ENCODE measurements at regions of chr1 and their contacts with region 1.

Region 1: GRCh38 chr1:156525071-156525501 is 24.5 kb upstream of the MEF2D start:
- DNase-seq: no peak
- ATAC-seq: peak in 3 of 8 donors; percentile 15 to 43 (median 27)
- H3K4me3 ChIP-seq: no peak overlapping the region
- H3K27ac ChIP-seq: peak overlapping the region in 2 of 10 donors; percentile 15 to 69
- H3K4me1 ChIP-seq: peaks cover 0 to 22% (median 8%) of the 10 kb centered on the region in 9 donors
- H3K27me3 ChIP-seq: no peaks in the 10 kb centered on the region
- CTCF ChIP-seq: no peak

Region 2: GRCh38 chr1:156291226-156292061 is 233.6 kb before region 1 on chr1:
- intact Hi-C with region 1: no loop called
- DNase-seq: peak; percentile 87 to 90
- ATAC-seq: peak; percentile 93 to 97 (median 94)
- H3K4me3 ChIP-seq: peak overlapping the region in 9 of 10 donors; percentile 29 to 59 (median 56)
- H3K27ac ChIP-seq: peak overlapping the region in 9 of 10 donors; percentile 54 to 83 (median 78)
- H3K4me1 ChIP-seq: peaks cover 5 to 39% (median 27%) of the 10 kb centered on the region in 9 donors
- H3K27me3 ChIP-seq: no peaks in the 10 kb centered on the region
- CTCF ChIP-seq: no peak

Region 3: GRCh38 chr1:156565519-156565918 is 40.4 kb after region 1 on chr1:
- intact Hi-C with region 1: loop called in 1 of 10 experiments (anchors 5 kb)
- DNase-seq: no peak
- ATAC-seq: no peak
- H3K4me3 ChIP-seq: no peak overlapping the region
- H3K27ac ChIP-seq: no peak overlapping the region
- H3K4me1 ChIP-seq: peaks cover 0 to 3% (median 0%) of the 10 kb centered on the region in 9 donors
- H3K27me3 ChIP-seq: no peaks in the 10 kb centered on the region
- CTCF ChIP-seq: no peak